Transverse colon (tissue), 4 donors: ENCODE measurements at regions of chr12 and their contacts with region 1.

Region 1: DNA sequence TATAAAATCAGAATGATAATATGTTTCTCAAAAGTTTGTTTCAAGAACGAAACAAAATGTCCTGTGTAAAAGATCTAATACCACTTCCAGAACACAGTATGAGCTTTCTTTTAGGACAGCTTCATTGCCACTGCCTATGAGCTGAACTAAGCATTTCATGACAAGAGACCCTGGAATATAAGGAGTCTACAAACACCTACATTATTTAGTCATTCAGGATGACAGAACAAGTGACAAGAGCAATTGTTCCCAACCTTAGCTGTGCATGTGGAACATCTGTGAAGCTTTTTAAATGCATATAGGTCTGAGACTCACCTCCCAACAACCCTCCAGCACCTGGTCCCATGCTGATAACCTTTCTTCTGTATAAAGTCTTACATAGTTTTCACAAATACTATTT is 103.1 kb upstream of the GARIN6 start:
- DNase-seq: no peak
- H3K4me3 ChIP-seq: no peak overlapping the region
- H3K27ac ChIP-seq: no peak overlapping the region
- H3K4me1 ChIP-seq: no peaks in the 10 kb centered on the region
- H3K27me3 ChIP-seq: no peaks in the 10 kb centered on the region
- CTCF ChIP-seq: no peak
- EP300 ChIP-seq: no peak
- POLR2A ChIP-seq: no peak

Region 2: DNA sequence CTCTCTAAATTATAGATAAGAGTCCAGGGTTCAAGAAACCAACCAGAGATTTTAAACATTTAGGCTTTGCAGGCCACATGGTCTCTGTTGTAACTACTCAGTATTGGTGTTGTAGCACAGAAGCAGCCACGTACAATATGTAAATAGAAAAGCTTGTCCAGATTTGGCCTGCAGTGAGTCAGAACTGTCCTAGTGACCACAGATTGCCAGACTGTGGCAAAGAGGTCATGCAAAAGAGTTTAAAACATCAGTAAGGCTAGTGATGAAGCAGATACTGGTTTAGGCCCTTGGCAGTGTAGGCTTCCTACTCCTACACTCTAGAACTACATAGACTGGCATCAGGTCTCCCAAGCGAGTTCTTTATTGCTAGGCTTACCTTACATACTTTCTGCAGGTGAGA is 14.5 kb before region 1 on chr12:
- in situ Hi-C with region 1: no loop called
- intact Hi-C with region 1: loop called (anchors 1 kb)
- DNase-seq: no peak
- H3K4me3 ChIP-seq: no peak overlapping the region
- H3K27ac ChIP-seq: no peak overlapping the region
- H3K4me1 ChIP-seq: no peaks in the 10 kb centered on the region
- H3K27me3 ChIP-seq: no peaks in the 10 kb centered on the region
- CTCF ChIP-seq: no peak
- EP300 ChIP-seq: no peak
- POLR2A ChIP-seq: no peak

Region 3: DNA sequence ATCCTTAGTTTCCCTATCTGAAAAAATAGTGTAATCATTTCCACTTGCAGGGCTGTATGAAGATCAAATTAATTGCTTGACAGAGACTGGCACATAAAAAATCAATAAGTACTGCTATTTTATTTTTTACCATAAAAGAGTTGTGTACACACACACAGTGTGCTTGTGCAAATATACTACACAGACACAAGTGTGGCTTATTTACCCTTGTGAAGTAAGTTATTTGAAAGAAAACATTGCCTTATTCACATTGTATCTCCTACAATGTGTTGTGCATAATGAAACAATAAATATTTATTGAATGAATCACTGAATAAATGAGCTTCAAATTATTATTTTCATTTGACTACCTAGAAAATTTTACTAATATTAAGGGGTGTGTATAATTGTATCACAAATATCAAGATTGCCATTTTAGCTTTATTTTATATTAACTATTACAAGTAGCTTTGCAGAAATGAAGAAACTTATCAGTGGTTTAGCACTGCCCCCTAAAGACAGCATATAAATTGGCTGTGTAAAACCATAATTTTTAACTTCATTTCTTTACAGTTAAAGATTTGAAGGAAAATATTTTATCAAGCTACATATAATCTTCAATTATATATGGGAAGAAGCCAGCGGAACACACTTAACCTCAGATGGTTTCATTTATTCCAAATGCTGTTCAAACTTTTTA is 114.4 kb after region 1 on chr12:
- in situ Hi-C with region 1: no loop called
- intact Hi-C with region 1: no loop called
- DNase-seq: no peak
- H3K4me3 ChIP-seq: no peak overlapping the region
- H3K27ac ChIP-seq: no peak overlapping the region
- H3K4me1 ChIP-seq: no peaks in the 10 kb centered on the region
- H3K27me3 ChIP-seq: no peaks in the 10 kb centered on the region
- CTCF ChIP-seq: no peak
- EP300 ChIP-seq: no peak
- POLR2A ChIP-seq: no peak